ENCODE measurements at regions of chr14 and their contacts with region 1.

Region 1: DNA sequence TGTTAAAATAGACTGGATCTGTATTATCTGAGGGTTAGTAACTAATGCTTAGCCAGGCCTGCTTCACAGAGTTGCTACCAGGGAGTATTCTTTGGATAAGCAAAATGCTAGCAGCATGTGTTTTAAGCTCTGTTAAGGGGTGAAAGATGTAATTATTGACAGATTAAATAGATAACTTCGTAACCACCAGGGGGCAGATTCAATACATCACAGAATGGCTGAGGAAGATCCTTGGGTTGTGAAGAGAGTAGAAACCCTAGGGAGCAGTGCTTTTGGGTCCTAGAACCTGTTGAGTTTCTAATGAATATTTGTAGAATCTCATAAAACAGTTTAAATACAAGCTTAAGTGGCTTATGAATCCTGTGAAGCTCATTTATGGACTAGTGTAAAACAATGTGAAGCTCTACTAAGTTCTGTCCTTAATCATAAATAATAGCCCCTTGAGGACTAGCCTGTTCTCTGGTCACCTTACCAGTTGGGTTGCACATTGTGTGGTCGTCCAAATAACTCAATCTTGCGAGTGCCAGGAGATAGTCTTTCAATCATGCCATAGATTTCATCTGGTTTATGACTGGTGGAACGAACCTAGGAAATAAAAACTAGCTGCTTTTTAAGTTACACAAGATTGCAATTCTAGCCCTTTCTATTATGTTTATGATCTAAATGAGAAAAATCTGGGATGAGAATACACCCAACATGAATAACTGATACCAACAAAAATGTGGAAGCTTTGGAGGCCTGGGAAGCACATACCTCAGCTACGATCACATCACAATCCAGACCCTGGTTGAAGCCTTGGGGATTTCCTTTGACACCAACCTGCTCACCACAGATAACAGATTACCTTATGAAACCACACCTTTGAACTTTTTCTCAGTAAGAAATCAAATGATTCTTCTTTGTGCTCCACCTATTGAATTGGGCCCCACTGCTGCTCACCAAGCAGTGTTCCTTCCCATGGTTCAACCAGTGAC is 12.3 kb downstream of the METTL3 start:
- DNase-seq: peak; percentile 73
- ATAC-seq: peak; percentile 41; the same call in 1 of the 2 replicates
- H3K4me3 ChIP-seq: no peak overlapping the region
- H3K27ac ChIP-seq: peak overlapping the region; percentile 33; the same call in 1 of the 2 replicates
- H3K4me1 ChIP-seq: peaks cover 6% of the 10 kb centered on the region
- H3K27me3 ChIP-seq: no peaks in the 10 kb centered on the region
- CTCF ChIP-seq: peak; percentile 49
- POLR2A ChIP-seq: no peak
- RAD21 ChIP-seq: peak; percentile 46

Region 2: GRCh38 chr14:21476925-21477681 is 21.7 kb before region 1 on chr14 and contains the starts of genes RAB2B and TOX4:
- CTCF ChIA-PET with region 1: interaction called, 10 read pairs
- POLR2A ChIA-PET with region 1: no interaction called
- dilution Hi-C with region 1: no loop called
- in situ Hi-C with region 1: no loop called
- intact Hi-C with region 1: no loop called
- DNase-seq: peak; percentile 99
- ATAC-seq: peak; percentile 100
- H3K4me3 ChIP-seq: peak within 1 kb of the TSS; percentile 90
- H3K27ac ChIP-seq: peak within 1 kb of the TSS; percentile 90
- H3K4me1 ChIP-seq: no peaks in the 10 kb centered on the region; the same call in 1 of the 2 replicates
- H3K27me3 ChIP-seq: no peaks in the 10 kb centered on the region
- CTCF ChIP-seq: peak; percentile 100; the same call in 1 of the 2 replicates
- POLR2A ChIP-seq: peak; percentile 95
- RAD21 ChIP-seq: peak; percentile 53; the same call in 1 of the 2 replicates
- total RNA-seq, gene RAB2B: 25.0 and 26.2 TPM in 2 replicates
- total RNA-seq, gene TOX4: 26.7 and 31.7 TPM in 2 replicates

Region 3: GRCh38 chr14:21510735-21511657 is 12.2 kb after region 1 on chr14 and contains the start of gene METTL3:
- CTCF ChIA-PET with region 1: interaction called, 4 read pairs
- POLR2A ChIA-PET with region 1: no interaction called
- dilution Hi-C with region 1: no loop called
- in situ Hi-C with region 1: no loop called
- intact Hi-C with region 1: loop called (anchors 1 kb)
- DNase-seq: peak; percentile 99
- ATAC-seq: peak; percentile 99
- H3K4me3 ChIP-seq: peak within 1 kb of the TSS; percentile 68
- H3K27ac ChIP-seq: peak within 1 kb of the TSS; percentile 76
- H3K4me1 ChIP-seq: no peaks in the 10 kb centered on the region
- H3K27me3 ChIP-seq: no peaks in the 10 kb centered on the region
- CTCF ChIP-seq: no peak
- POLR2A ChIP-seq: peak; percentile 71; the same call in 1 of the 2 replicates
- RAD21 ChIP-seq: no peak
- total RNA-seq, gene METTL3: 68.9 and 109 TPM in 2 replicates

Region 4: GRCh38 chr14:22002860-22003309 is 504.0 kb after region 1 on chr14:
- CTCF ChIA-PET with region 1: no interaction called
- POLR2A ChIA-PET with region 1: interaction called, 13 read pairs
- dilution Hi-C with region 1: no loop called
- in situ Hi-C with region 1: no loop called
- intact Hi-C with region 1: no loop called
- DNase-seq: no peak
- ATAC-seq: no peak
- H3K4me3 ChIP-seq: no peak overlapping the region
- H3K27ac ChIP-seq: no peak overlapping the region
- H3K4me1 ChIP-seq: no peaks in the 10 kb centered on the region
- H3K27me3 ChIP-seq: no peaks in the 10 kb centered on the region
- CTCF ChIP-seq: 0 out of 2 replicates have a peak, but pooled peaks have one; percentile 7
- POLR2A ChIP-seq: no peak
- RAD21 ChIP-seq: no peak

Measured in IMR-90 (cell line).